ENCODE measurements at regions of chr7 and their contacts with region 1.

Region 1: DNA sequence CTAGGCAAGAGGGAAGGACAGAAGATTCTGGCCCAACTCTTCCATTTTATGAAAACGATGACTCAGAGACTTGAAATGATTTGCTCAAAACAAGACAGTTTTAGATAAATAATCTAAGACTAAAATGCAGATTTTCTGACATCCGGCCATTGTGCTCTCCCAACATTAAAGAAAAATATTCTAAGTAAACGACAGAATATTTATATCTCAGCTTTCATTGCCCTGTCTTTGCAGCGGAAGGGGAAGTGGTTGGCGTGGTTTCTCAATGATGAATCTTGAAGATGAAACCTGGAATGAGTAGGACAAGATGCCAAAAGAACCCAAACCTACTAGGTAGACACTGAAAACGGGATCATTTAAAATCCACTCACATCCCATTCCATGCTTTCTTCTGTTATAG is 28.9 kb upstream of the NPY start:
- DNase-seq: no peak
- H3K4me3 ChIP-seq: no peak overlapping the region
- H3K27ac ChIP-seq: no peak overlapping the region
- H3K27me3 ChIP-seq: peaks cover 0 to 20% (median 0%) of the 10 kb centered on the region in 45 donors
- CTCF ChIP-seq: no peak

Region 2: DNA sequence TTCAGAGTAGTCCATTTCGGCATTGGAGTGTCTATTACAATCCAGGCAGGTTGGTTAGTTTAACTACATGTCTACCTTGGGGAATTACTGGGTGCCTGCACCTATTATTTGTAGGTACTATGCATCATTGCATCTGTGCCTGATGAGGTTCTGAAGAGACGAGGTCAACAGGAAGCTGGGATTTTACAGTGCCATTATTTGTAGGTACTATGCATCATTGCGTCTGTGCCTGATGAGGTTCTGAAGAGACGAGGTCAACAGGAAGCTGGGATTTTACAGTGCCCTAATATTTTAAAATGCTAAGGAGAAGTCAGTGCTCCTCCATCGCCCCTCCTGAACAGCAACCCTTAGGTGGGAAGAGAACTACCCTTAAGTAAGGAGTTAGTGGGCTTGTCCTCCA is 70.6 kb after region 1 on chr7:
- intact Hi-C with region 1: loop called in 1 of 2 experiments (anchors 10 kb)
- DNase-seq: no peak
- H3K4me3 ChIP-seq: no peak overlapping the region
- H3K27ac ChIP-seq: no peak overlapping the region
- H3K27me3 ChIP-seq: peaks cover 0 to 7% (median 0%) of the 10 kb centered on the region in 45 donors
- CTCF ChIP-seq: no peak

Measured in dorsolateral prefrontal cortex (tissue), 120 donors.